RWPE1 (cell line): ENCODE measurements at regions of chr9 and their contacts with region 1.

Region 1: GRCh38 chr9:129726322-129727160 is 26.3 kb downstream of the PTGES start:
- DNase-seq: peak; percentile 92
- H3K27ac ChIP-seq: no peak overlapping the region
- CTCF ChIP-seq: peak; percentile 100

Region 2: GRCh38 chr9:129473523-129474229 is 252.9 kb before region 1 on chr9:
- CTCF ChIA-PET with region 1: no interaction called
- POLR2A ChIA-PET with region 1: no interaction called
- DNase-seq: no peak
- H3K27ac ChIP-seq: peak overlapping the region; percentile 66
- CTCF ChIP-seq: no peak

Region 3: GRCh38 chr9:129696938-129697650 is 29.4 kb before region 1 on chr9:
- CTCF ChIA-PET with region 1: interaction called, 10 read pairs
- POLR2A ChIA-PET with region 1: no interaction called
- DNase-seq: peak; percentile 70
- H3K27ac ChIP-seq: peak overlapping the region; percentile 21
- CTCF ChIP-seq: no peak

Region 4: DNA sequence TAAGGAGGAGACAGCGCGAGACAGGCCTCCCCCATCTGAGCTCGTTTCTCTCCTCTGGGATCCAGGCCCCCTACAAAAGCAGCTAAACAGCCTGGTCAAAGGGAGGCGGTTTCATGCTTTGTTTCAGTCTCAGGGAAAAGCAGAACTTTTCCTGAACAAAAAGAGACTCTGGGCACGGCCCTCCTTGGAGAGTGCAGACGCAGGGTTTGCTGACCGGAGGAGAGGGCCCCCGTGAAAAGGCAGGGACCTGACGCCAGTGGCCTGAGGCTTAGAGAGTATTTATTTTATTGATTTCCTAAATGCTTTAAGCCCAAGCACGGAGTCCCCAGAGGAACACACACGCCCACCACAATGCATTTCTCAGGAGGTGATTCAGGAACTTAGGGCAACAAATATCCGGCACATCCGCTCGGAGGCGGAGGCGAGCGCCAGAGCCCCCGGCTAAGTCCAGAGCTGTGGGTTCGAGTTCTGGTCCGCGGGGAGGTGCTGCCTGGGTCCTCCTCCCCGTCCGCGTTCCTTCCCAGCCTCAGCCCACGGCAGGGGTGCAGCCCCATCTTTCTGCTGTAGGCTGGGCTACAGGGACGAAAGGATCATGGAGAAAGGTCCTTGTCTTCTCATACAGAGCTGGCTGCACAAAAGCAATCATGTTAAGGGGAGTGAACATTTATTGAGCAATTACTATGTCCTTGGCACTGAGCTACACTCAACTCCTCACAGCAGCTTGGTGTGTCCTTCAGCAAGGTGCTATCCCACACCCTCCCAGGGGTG is 13.7 kb before region 1 on chr9:
- CTCF ChIA-PET with region 1: interaction called, 11 read pairs
- POLR2A ChIA-PET with region 1: no interaction called
- DNase-seq: no peak
- H3K27ac ChIP-seq: no peak overlapping the region
- CTCF ChIP-seq: no peak

Region 5: GRCh38 chr9:129776938-129777768 is 50.6 kb after region 1 on chr9:
- CTCF ChIA-PET with region 1: interaction called, 43 read pairs
- POLR2A ChIA-PET with region 1: no interaction called
- DNase-seq: peak; percentile 99
- H3K27ac ChIP-seq: peak overlapping the region; percentile 82
- CTCF ChIP-seq: no peak

Region 6: DNA sequence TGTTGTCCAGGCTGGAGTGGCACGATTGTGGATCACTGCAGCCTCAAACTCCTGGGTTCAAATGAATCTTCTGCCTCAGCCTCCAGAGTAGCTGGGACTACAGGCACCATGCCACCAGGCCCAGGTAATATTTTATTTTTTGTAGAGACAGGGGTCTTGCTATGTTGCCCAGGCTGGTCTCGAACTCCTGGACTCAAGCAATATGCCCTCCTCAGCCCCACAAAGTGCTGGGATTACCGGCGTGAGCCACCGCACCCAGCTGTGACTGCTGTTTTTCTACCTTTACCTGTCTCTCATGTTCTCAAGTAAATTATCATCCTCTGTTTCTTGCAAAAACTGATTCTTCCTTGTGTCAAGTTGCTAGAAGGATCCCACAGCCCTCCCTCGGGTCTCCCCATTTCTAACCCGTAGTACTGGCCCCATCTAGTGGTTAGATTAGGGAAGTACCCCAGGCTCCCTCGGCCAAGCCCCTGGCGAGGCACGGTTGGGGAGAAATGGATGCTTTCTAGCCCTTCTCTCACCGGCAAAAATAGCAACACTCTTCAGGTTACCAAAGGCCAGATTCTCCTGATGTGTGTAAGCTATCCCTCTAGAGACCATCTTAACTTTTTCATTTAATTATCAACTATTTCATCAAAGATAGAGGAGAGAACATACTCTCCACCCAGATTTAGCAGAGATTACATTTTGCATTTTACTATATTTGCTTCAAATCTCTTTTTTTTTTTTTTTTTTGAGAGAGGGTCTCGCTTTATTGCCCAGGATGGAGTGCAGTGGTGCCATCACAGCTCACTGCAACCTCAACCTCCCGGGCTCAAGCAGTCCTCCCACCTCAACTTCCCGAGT is 57.2 kb after region 1 on chr9:
- CTCF ChIA-PET with region 1: interaction called, 43 read pairs
- POLR2A ChIA-PET with region 1: no interaction called
- DNase-seq: peak; percentile 97
- H3K27ac ChIP-seq: no peak overlapping the region
- CTCF ChIP-seq: peak; percentile 99

Region 7: DNA sequence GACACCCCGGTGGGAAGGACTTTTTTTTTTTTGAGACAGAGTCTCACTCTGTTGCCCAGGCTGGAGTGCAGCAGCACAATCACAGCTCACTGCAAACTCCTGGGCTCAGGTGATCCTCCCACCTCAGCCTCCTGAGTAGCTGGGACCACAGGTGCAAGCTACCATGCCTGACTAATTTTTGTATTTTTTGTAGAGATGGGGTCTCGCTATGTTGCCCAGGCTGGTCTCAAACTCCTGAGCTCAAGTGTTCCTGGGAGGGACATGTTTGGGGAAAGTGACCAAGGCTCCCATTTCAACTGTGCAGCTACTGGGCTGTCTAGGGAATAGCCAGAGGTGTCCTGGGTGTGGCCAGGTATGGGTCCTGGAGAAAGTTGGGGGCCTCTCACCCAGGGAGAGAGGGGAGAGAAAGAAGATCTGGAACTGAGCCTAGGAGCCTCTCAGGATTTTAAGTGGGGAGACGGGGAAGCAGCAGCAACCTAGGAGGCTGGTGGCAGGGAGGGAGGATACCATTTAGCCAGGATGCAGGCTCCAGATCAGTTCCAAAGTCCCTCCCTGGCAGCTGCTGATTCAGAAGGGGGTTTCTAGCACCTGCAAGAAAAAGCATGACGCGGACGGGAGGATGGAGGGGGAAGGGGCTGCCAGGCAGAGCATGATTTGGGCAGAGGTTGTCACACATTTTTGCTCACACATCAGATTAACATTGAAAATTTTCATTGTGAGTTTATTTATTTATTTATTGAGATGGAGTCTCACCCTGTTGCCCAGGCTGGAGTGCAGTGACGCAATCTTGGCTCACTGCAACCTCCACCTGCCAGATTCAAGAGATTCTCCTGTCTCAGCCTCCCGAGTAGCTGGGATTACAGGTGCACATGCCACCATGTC is 69.7 kb after region 1 on chr9:
- CTCF ChIA-PET with region 1: interaction called, 36 read pairs
- POLR2A ChIA-PET with region 1: interaction called, 6 read pairs
- DNase-seq: no peak
- H3K27ac ChIP-seq: no peak overlapping the region
- CTCF ChIP-seq: no peak